Activated T-helper 1 cell treated with anti-CD3 and anti-CD28 coated beads, Interleukin-12 subunit alpha, Interleukin-12 subunit beta, Interleukin-2, Interleukin-4 antibody, amounts not matched to agents 30 ng/mL and 10 ng/mL and 1 ng/mL, durations not matched to agents 14 hours and 24 hours and 36 hours (primary cell): ENCODE measurements at regions of chr4 and their contacts with region 1.

Region 1: DNA sequence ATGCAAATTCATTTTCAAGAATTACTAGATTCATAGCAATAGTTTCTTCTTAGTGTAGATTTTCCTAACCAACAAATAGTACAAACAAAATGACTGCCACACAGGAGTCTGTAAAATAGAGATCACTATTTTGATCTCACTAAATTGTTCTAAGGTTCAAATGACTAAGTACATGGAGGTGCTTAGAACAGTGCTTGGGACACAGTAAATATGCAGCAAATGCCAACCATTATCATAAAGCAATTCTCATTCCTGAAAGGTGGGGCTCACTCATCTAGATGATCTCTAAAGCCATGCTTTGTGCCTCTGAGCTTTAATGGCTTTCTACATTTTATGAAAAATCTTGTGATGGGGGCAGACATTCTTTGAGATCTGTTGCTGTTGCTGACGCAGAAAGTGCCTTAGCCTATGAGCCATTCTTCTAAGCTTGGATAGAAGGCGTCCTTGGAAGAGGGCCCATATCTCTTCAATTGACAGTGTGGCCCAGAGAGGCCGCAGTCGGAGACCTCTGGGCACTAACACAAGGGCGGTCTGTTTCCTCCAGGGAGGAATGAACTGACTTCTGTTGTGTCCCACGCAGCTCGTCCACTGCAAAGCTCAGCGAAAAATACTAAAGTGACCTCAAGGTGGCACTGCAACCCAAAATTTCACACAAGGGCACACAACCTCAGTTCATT is 23.5 kb downstream of the TLR10 start:
- DNase-seq: peak; percentile 34
- H3K4me3 Mint-ChIP-seq: no peak overlapping the region
- H3K27ac Mint-ChIP-seq: no peak overlapping the region
- H3K4me1 Mint-ChIP-seq: peaks cover 29% of the 10 kb centered on the region
- H3K27me3 Mint-ChIP-seq: no peaks in the 10 kb centered on the region

Region 2: GRCh38 chr4:38582889-38583470 is 176.3 kb before region 1 on chr4:
- intact Hi-C with region 1: no loop called
- DNase-seq: no peak
- H3K4me3 Mint-ChIP-seq: no peak overlapping the region
- H3K27ac Mint-ChIP-seq: no peak overlapping the region
- H3K4me1 Mint-ChIP-seq: peaks cover 9% of the 10 kb centered on the region
- H3K27me3 Mint-ChIP-seq: peaks cover 15% of the 10 kb centered on the region

Region 3: GRCh38 chr4:38782452-38783108 is 23.3 kb after region 1 on chr4 and contains the start of gene TLR10:
- intact Hi-C with region 1: loop called (anchors 1 kb)
- DNase-seq: no peak
- H3K4me3 Mint-ChIP-seq: no peak within 1 kb of the TSS
- H3K27ac Mint-ChIP-seq: no peak within 1 kb of the TSS
- H3K4me1 Mint-ChIP-seq: peaks cover 11% of the 10 kb centered on the region
- H3K27me3 Mint-ChIP-seq: peaks cover 1% of the 10 kb centered on the region
- total RNA-seq, gene TLR10: not detected in 2 replicates

Region 4: GRCh38 chr4:38894340-38894982 is 135.2 kb after region 1 on chr4:
- intact Hi-C with region 1: loop called (anchors 1 kb)
- DNase-seq: no peak
- H3K4me3 Mint-ChIP-seq: no peak overlapping the region
- H3K27ac Mint-ChIP-seq: peak overlapping the region; percentile 81
- H3K4me1 Mint-ChIP-seq: peaks cover 41% of the 10 kb centered on the region
- H3K27me3 Mint-ChIP-seq: no peaks in the 10 kb centered on the region

Region 5: DNA sequence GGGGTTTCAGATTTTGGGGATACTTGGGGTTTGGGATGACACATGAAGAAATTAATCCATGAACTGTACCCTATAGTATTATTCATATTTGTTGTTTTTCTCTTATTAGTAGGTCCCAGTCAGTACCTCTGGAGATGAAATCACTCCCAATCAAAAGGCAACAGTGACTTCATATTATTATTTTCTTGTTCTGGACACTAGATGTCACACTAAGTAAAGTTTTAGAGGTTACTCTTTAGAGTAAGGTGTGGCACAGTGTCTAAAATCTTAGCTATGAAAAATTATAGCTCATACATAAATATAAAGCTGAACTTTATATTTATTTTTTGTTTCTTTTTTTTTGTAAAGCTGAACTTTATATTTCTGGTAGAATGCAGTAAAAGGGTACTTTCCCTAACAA is 143.4 kb after region 1 on chr4:
- intact Hi-C with region 1: loop called (anchors 2 kb)
- DNase-seq: no peak
- H3K4me3 Mint-ChIP-seq: no peak overlapping the region
- H3K27ac Mint-ChIP-seq: no peak overlapping the region
- H3K4me1 Mint-ChIP-seq: peaks cover 35% of the 10 kb centered on the region
- H3K27me3 Mint-ChIP-seq: peaks cover 10% of the 10 kb centered on the region

Region 6: DNA sequence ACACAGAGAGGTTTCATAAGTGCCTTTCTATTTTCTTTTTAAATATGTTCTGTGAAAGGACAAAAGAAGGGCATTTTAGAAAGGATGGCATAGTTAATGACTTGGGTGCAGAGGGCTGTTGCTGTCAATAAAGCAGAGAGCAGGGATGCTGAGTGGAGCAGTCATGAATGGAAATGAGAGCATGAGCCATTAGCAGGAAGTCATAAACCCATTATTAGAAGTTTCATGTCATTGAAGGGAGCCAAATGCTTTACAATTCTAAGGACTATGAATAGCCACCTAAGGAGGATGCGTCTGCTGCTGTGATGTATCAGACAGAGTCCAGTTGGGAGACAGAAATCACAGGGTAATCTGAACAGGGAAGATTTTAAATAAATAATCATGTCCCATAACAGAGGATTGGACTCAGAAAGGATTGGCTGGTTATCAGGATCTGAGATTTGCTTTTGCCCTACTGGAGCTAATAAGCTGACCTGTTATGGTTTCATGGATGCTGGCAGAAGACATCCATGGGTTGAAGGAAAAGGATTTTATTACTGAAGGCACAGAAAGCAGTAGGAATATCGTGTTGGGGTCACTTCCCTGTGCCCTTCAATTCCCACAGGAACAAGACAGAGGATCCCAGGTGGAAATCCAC is 375.6 kb after region 1 on chr4:
- intact Hi-C with region 1: loop called (anchors 1 kb)
- DNase-seq: no peak
- H3K4me3 Mint-ChIP-seq: no peak overlapping the region
- H3K27ac Mint-ChIP-seq: no peak overlapping the region
- H3K4me1 Mint-ChIP-seq: peaks cover 19% of the 10 kb centered on the region
- H3K27me3 Mint-ChIP-seq: no peaks in the 10 kb centered on the region

Region 7: GRCh38 chr4:39181905-39182638 is 422.8 kb after region 1 on chr4 and contains the start of gene WDR19:
- intact Hi-C with region 1: loop called (anchors 2 kb)
- DNase-seq: peak; percentile 98
- H3K4me3 Mint-ChIP-seq: no peak within 1 kb of the TSS
- H3K27ac Mint-ChIP-seq: no peak within 1 kb of the TSS
- H3K4me1 Mint-ChIP-seq: no peaks in the 10 kb centered on the region
- H3K27me3 Mint-ChIP-seq: peaks cover 15% of the 10 kb centered on the region
- total RNA-seq, gene WDR19: 12.6 and 13.7 TPM in 2 replicates